CD14-positive monocyte (primary cell): ENCODE measurements at regions of chr3 and their contacts with region 1.

Region 1: GRCh38 chr3:15300323-15301078 is 31.9 kb downstream of the SH3BP5 start:
- DNase-seq: peak; percentile 87 to 97 (median 95)
- H3K4me3 ChIP-seq: no peak overlapping the region
- H3K4me3 Mint-ChIP-seq: peak overlapping the region in 1 of 2 donors; percentile 57
- H3K27ac ChIP-seq: peak overlapping the region; percentile 67 to 93
- H3K27ac Mint-ChIP-seq: peak overlapping the region; percentile 91 to 99 (median 97)
- H3K4me1 ChIP-seq: peaks cover 44 to 55% of the 10 kb centered on the region in 2 donors
- H3K4me1 Mint-ChIP-seq: peaks cover 46% of the 10 kb centered on the region
- H3K27me3 ChIP-seq: no peaks in the 10 kb centered on the region
- H3K27me3 Mint-ChIP-seq: peaks cover 0 to 8% (median 8%) of the 10 kb centered on the region in 3 donors
- CTCF ChIP-seq: peak; percentile 5

Region 2: DNA sequence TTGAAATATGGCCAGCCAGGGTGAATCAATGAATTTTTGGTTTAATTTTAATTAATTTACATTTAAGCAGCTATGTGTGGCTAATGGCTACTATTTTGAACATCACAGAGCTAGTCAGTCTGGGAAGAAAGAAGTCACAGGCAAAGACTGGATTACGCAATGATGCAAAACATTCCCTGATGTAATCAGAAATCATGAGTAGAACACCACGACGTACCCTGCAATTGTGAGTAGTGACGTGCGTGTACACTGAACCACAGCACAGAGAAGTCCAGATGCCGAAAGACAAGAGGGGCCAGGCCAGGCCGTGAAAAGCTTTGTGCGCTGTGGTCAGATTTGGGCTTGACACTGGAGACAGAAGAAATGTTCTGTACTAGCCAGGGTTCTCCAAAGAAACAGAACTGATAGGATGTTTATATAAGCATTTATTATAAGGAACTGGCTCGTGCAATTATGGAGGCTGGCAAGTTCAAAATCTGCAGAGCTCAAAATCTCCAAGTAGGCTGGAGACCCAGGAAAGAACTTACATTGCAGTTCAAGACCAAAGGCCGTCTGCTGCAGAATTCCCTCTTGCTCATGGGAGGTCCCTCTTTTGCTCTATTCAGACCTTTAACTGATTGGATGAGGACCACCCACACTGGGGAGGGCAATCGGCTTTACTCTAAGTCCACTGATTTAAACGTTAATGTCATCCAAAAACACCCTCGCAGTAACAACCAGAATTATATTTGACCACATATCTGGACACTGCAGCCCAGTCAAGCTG is 12.8 kb before region 1 on chr3:
- intact Hi-C with region 1: loop called in 1 of 2 experiments (anchors 1 kb)
- DNase-seq: peak; percentile 91 to 98 (median 97)
- H3K4me3 ChIP-seq: peak overlapping the region in 1 of 3 experiments; percentile 21
- H3K4me3 Mint-ChIP-seq: peak overlapping the region in 1 of 2 donors; percentile 48
- H3K27ac ChIP-seq: peak overlapping the region; percentile 77 to 95
- H3K27ac Mint-ChIP-seq: peak overlapping the region; percentile 96 to 100 (median 98)
- H3K4me1 ChIP-seq: peaks cover 63 to 64% of the 10 kb centered on the region in 2 donors
- H3K4me1 Mint-ChIP-seq: peaks cover 68% of the 10 kb centered on the region
- H3K27me3 ChIP-seq: no peaks in the 10 kb centered on the region
- H3K27me3 Mint-ChIP-seq: peaks cover 0 to 5% (median 0%) of the 10 kb centered on the region in 3 donors
- CTCF ChIP-seq: no peak

Region 3: DNA sequence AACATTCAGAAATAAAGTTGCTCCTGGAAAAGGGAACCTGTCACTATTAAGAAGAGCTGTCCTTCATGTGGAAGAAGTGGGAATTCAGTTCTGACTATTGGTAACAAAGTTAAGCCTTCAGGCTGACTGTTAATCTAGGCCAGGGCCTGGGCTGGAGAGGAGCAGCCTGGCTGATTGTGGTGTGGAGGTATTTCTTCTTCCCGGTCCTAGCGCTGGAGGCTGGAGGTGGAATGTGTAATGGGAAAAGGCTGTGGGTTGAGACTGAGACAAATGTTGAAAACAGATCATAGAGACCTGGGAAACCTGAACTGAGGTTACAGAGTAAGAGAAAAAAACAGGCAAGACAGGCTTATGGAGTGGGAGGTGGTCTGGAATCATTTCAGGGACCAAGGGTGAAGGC is 55.7 kb after region 1 on chr3:
- intact Hi-C with region 1: no loop called
- DNase-seq: no peak
- H3K4me3 ChIP-seq: no peak overlapping the region
- H3K4me3 Mint-ChIP-seq: no peak overlapping the region
- H3K27ac ChIP-seq: no peak overlapping the region
- H3K27ac Mint-ChIP-seq: peak overlapping the region in 3 of 7 donors; percentile 18 to 77 (median 64)
- H3K4me1 ChIP-seq: peaks cover 25 to 36% of the 10 kb centered on the region in 2 donors
- H3K4me1 Mint-ChIP-seq: peaks cover 25% of the 10 kb centered on the region
- H3K27me3 ChIP-seq: no peaks in the 10 kb centered on the region
- H3K27me3 Mint-ChIP-seq: peaks cover 0 to 2% (median 0%) of the 10 kb centered on the region in 3 donors
- CTCF ChIP-seq: no peak